ENCODE measurements at regions of chr12 and their contacts with region 1.

Region 1: DNA sequence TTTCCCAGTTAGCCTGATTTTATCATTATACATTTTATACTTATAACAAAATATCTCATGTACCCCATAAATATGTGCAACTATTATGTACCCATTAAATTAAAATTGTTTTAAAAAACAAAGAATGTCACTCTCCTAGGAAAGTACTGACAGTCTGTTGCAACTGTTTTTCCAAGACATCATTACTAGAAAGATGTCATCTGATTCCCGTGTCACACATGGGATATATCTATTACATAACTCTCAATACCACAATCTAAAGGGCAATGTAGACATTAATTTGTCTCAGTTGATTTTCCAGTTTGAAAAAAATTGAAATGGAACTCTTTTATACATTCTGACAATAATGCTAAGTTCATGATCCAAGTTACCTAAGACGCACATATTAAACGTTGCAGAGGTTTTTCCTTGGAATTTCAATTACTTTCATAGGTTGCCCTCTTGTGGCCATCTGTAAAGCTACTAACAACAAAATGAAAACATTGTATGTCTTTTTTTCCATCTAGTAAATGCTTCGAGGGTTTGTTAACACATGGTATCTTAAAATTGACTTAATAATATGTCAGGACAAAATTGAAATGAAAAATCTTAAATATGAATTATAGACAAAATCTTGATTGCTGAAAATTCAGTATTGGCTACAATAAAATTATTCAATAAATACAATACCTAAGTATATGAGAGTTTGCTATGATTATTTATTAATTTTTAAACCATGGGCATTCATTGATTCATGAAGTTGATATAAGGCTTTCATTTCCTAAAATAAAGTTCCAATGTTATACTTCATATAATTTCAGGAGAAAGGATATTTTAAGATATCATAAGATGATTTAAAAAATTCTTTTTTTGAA is 131.6 kb downstream of the PPFIA2 start:
- DNase-seq: no peak
- ATAC-seq: peak in 1 of 2 donors; percentile 30

Region 2: GRCh38 chr12:81450920-81451739 is 176.4 kb before region 1 on chr12:
- intact Hi-C with region 1: loop called (anchors 1 to 5 kb)
- DNase-seq: peak; percentile 21
- ATAC-seq: peak; percentile 76 to 81

Region 3: GRCh38 chr12:82351390-82351789 is 723.8 kb after region 1 on chr12:
- intact Hi-C with region 1: no loop called
- DNase-seq: no peak
- ATAC-seq: no peak

Measured in left cardiac atrium (tissue), 4 donors.